ENCODE measurements at regions of chr10 and their contacts with region 1.

Region 1: GRCh38 chr10:73886085-73886529 is 11.8 kb upstream of the CAMK2G start:
- DNase-seq: peak; percentile 72
- H3K4me3 ChIP-seq: no peak overlapping the region
- H3K27ac ChIP-seq: peak overlapping the region; percentile 88
- H3K4me1 ChIP-seq: peaks cover 26% of the 10 kb centered on the region
- H3K27me3 ChIP-seq: no peaks in the 10 kb centered on the region
- CTCF ChIP-seq: peak; percentile 82 to 88
- POLR2A ChIP-seq: no peak

Region 2: DNA sequence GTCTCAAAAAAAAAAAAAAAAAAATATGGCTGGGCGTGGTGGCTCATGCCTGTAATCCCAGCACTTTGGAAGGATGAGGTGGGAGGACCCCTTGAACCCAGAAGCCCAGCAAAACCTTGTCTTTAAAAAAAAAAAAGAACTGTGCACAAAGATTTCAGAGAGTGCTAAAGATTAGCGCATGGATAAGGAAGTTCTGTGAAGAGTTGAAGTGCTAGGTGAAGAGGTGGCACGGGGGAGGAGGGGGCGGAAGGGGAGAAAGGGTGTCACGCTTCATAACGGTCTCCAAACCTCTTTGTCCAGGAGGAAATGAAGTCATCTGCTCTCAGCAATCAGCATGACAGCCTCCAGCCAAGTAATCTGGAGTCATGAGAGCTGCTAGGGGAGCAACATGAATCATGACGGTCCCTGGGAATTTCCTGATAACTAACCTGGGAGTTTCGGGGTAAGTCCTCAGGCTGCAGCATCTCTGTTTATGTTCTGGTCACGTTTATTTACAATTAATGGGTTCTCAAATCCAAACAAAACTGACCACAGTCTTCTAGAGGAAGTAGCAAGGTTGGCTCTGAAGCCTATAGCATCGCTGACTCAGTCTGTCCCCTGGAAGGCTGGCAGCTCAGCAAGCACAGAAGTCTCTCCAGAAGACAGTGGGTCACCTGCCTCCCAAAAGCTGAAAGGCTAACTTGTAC is 22.9 kb after region 1 on chr10:
- CTCF ChIA-PET with region 1: interaction called, 59 read pairs
- POLR2A ChIA-PET with region 1: interaction called, 7 read pairs
- dilution Hi-C with region 1: no loop called
- intact Hi-C with region 1: loop called (anchors 1 kb)
- DNase-seq: peak; percentile 94
- H3K4me3 ChIP-seq: no peak overlapping the region
- H3K27ac ChIP-seq: peak overlapping the region; percentile 90
- H3K4me1 ChIP-seq: peaks cover 59% of the 10 kb centered on the region
- H3K27me3 ChIP-seq: no peaks in the 10 kb centered on the region
- CTCF ChIP-seq: no peak
- POLR2A ChIP-seq: peak; percentile 50

Region 3: DNA sequence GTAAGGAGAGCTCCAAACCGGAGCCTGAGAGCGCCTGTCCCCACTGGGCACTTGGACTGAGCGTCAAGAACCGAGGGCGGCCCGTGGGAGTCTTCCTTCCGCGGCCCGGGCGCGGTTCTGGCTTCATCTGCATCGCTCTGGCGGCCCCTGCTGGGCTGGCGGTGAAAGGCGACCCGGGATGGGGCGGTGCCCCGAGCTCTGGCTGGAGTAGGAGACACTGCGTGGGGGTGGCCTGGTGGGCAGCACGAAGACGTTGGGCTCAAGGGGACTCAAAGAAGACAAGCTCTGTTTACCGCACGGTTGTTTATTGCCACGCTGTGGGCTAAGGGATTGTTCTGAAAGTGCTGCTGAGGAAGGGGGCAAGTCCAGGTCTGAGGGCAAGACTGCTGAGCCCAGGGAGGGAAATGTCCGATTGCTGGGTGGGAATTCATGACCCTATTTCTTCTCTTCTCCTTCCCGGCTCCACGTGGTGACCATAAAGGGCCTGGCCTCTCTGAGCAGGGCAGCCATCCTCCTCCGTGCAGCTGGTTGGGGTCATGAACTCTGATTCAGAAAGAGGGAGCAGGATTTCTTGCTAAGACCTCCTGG is 54.6 kb after region 1 on chr10:
- CTCF ChIA-PET with region 1: interaction called, 439 read pairs
- POLR2A ChIA-PET with region 1: interaction called, 4 read pairs
- dilution Hi-C with region 1: no loop called
- intact Hi-C with region 1: loop called (anchors 1 kb)
- DNase-seq: peak; percentile 71
- H3K4me3 ChIP-seq: no peak overlapping the region
- H3K27ac ChIP-seq: peak overlapping the region; percentile 47
- H3K4me1 ChIP-seq: peaks cover 19% of the 10 kb centered on the region
- H3K27me3 ChIP-seq: no peaks in the 10 kb centered on the region
- CTCF ChIP-seq: peak; percentile 96 to 97
- POLR2A ChIP-seq: no peak

Region 4: GRCh38 chr10:73956476-73957359 is 70.6 kb after region 1 on chr10:
- CTCF ChIA-PET with region 1: interaction called, 43 read pairs
- POLR2A ChIA-PET with region 1: no interaction called
- dilution Hi-C with region 1: no loop called
- intact Hi-C with region 1: loop called (anchors 1 kb)
- DNase-seq: peak; percentile 33
- H3K4me3 ChIP-seq: no peak overlapping the region
- H3K27ac ChIP-seq: no peak overlapping the region
- H3K4me1 ChIP-seq: peaks cover 10% of the 10 kb centered on the region
- H3K27me3 ChIP-seq: no peaks in the 10 kb centered on the region
- CTCF ChIP-seq: no peak
- POLR2A ChIP-seq: no peak

Region 5: GRCh38 chr10:73997787-73998622 is 111.9 kb after region 1 on chr10 and contains the start of gene VCL:
- CTCF ChIA-PET with region 1: interaction called, 11 read pairs
- POLR2A ChIA-PET with region 1: interaction called, 8 read pairs
- dilution Hi-C with region 1: no loop called
- intact Hi-C with region 1: loop called (anchors 1 kb)
- DNase-seq: peak; percentile 99
- H3K4me3 ChIP-seq: peak within 1 kb of the TSS; percentile 73 to 91 (median 86)
- H3K27ac ChIP-seq: peak within 1 kb of the TSS; percentile 83
- H3K4me1 ChIP-seq: peaks cover 24% of the 10 kb centered on the region
- H3K27me3 ChIP-seq: no peaks in the 10 kb centered on the region
- CTCF ChIP-seq: no peak
- POLR2A ChIP-seq: peak; percentile 99
- total RNA-seq, gene VCL: 203 and 231 TPM in 2 replicates

Region 6: GRCh38 chr10:74035303-74035702 is 149.2 kb after region 1 on chr10:
- CTCF ChIA-PET with region 1: interaction called, 16 read pairs
- POLR2A ChIA-PET with region 1: no interaction called
- dilution Hi-C with region 1: no loop called
- intact Hi-C with region 1: loop called (anchors 1 kb)
- DNase-seq: peak; percentile 51
- H3K4me3 ChIP-seq: no peak overlapping the region
- H3K27ac ChIP-seq: no peak overlapping the region
- H3K4me1 ChIP-seq: peaks cover 10% of the 10 kb centered on the region
- H3K27me3 ChIP-seq: no peaks in the 10 kb centered on the region
- CTCF ChIP-seq: peak; percentile 9 to 14
- POLR2A ChIP-seq: no peak

Region 7: DNA sequence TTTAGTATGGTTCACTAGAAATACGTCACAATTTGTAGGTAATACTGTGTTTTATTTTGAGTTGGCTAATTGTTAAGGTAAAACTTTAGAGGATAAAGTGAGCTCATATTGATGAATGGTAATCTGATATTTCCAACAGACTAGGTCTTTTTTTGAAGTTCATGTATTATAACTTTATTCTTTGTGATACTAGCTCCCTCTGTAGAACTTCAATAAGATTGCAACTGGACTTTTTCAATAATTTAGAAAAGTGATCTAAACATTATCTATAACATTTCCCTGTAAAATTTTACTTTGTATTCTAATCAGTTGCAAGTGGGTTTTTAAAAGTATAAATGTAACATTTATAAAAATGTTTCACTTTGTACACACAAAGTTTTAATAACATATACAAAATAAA is 348.5 kb after region 1 on chr10:
- CTCF ChIA-PET with region 1: interaction called, 9 read pairs
- POLR2A ChIA-PET with region 1: no interaction called
- dilution Hi-C with region 1: no loop called
- intact Hi-C with region 1: loop called (anchors 2 kb)
- DNase-seq: peak; percentile 36
- H3K4me3 ChIP-seq: no peak overlapping the region
- H3K27ac ChIP-seq: no peak overlapping the region
- H3K4me1 ChIP-seq: peaks cover 41% of the 10 kb centered on the region
- H3K27me3 ChIP-seq: no peaks in the 10 kb centered on the region
- CTCF ChIP-seq: no peak
- POLR2A ChIP-seq: no peak

Region 8: GRCh38 chr10:75593692-75594556 is 1707.8 kb after region 1 on chr10:
- CTCF ChIA-PET with region 1: no interaction called
- POLR2A ChIA-PET with region 1: no interaction called
- dilution Hi-C with region 1: no loop called
- intact Hi-C with region 1: no loop called
- DNase-seq: no peak
- H3K4me3 ChIP-seq: no peak overlapping the region
- H3K27ac ChIP-seq: no peak overlapping the region
- H3K4me1 ChIP-seq: peaks cover 3% of the 10 kb centered on the region
- H3K27me3 ChIP-seq: peaks cover 0 to 10% of the 10 kb centered on the region in 2 experiments
- CTCF ChIP-seq: no peak
- POLR2A ChIP-seq: no peak